Common myeloid progenitor, CD34-positive (primary cell): ENCODE measurements at regions of chr9 and their contacts with region 1.

Region 1: GRCh38 chr9:125233678-125234077 is 7.5 kb downstream of the HSPA5 start:
- DNase-seq: peak in 2 of 3 donors; percentile 30 to 39
- H3K4me3 ChIP-seq: no peak overlapping the region
- H3K27ac ChIP-seq: no peak overlapping the region
- H3K4me1 ChIP-seq: peaks cover 5 to 16% (median 10%) of the 10 kb centered on the region in 4 experiments
- H3K27me3 ChIP-seq: no peaks in the 10 kb centered on the region

Region 2: GRCh38 chr9:125200210-125201047 is 33.2 kb before region 1 on chr9 and contains the start of gene RABEPK:
- CTCF ChIA-PET with region 1: no interaction called
- POLR2A ChIA-PET with region 1: interaction called, 14 read pairs
- DNase-seq: peak; percentile 90 to 94 (median 94)
- H3K4me3 ChIP-seq: peak within 1 kb of the TSS; percentile 74 to 98 (median 87)
- H3K27ac ChIP-seq: peak within 1 kb of the TSS; percentile 77 to 89
- H3K4me1 ChIP-seq: peaks cover 3 to 15% (median 8%) of the 10 kb centered on the region in 4 experiments
- H3K27me3 ChIP-seq: no peaks in the 10 kb centered on the region